HEK293 (cell line): ENCODE measurements at regions of chr20 and their contacts with region 1.

Region 1: GRCh38 chr20:62642040-62642665 is at the start of gene SLCO4A1:
- H3K4me3 ChIP-seq: peak within 1 kb of the TSS; percentile 48
- H3K27ac ChIP-seq: peak within 1 kb of the TSS; percentile 66; the same call in 1 of the 2 replicates
- H3K4me1 ChIP-seq: no peaks in the 10 kb centered on the region; the same call in 1 of the 2 replicates
- CTCF ChIP-seq: peak; percentile 68; the same call in 1 of the 2 replicates

Region 2: GRCh38 chr20:62623488-62624324 is 18.4 kb before region 1 on chr20:
- CTCF ChIA-PET with region 1: interaction called, 3 read pairs
- POLR2A ChIA-PET with region 1: interaction called, 12 read pairs
- H3K4me3 ChIP-seq: peak overlapping the region; percentile 3; the same call in 1 of the 2 replicates
- H3K27ac ChIP-seq: peak overlapping the region; percentile 72
- H3K4me1 ChIP-seq: peaks cover 10% of the 10 kb centered on the region
- CTCF ChIP-seq: no peak

Region 3: DNA sequence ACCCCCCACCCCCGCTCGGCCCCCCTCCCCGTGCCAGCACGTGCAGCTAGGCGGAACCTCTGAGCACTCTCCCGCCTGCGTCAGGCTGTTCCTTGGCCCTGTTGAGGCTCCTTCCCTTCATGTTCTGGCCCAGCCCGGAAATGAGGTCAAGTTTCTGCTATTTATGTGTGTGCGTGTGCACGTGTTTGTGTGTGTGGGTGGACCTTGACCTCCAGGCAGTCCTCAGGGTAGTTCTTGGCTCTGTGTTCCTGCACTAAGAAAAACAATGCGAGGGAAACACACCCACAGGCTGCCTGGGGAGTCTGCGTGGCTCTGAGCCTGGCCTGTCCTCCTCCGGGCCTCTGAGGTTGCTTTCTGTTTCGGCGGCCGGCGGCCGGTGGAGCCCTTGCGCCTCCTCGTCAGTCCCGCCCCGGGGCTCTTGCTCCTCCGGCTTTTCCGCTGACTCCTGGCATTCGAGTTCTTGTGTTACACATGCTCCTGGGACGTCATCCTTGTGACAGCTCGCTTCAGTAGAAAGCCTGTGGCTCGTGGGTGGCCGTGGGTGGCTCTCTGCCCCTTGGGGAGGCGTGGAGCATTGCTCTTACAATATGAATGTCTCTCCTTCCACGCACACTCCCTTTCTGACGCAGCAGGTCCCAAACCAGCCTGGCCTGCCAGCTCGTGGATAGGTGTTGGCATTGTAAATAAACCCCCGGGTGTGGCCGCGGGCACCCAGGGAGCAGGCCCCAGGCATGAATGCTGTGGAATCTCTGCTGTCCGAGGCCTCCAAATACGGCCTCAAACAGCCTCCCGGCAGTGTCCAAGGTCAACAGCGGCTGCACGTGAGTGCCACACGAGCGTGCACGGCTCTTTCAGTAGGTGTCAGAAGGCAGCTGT is 10.1 kb after region 1 on chr20:
- CTCF ChIA-PET with region 1: interaction called, 3 read pairs
- POLR2A ChIA-PET with region 1: interaction called, 10 read pairs
- H3K4me3 ChIP-seq: no peak overlapping the region
- H3K27ac ChIP-seq: no peak overlapping the region
- H3K4me1 ChIP-seq: peaks cover 9% of the 10 kb centered on the region
- CTCF ChIP-seq: no peak